Calu3 (cell line): ENCODE measurements at regions of chr6 and their contacts with region 1.

Region 1: GRCh38 chr6:138588805-138589434 is 89.6 kb upstream of the NHSL1 start:
- DNase-seq: peak; percentile 24
- H3K4me3 Mint-ChIP-seq: no peak overlapping the region
- H3K27ac Mint-ChIP-seq: no peak overlapping the region
- H3K4me1 Mint-ChIP-seq: peaks cover 28% of the 10 kb centered on the region
- H3K27me3 Mint-ChIP-seq: no peaks in the 10 kb centered on the region
- CTCF ChIP-seq: peak; percentile 66

Region 2: GRCh38 chr6:136956590-136957544 is 1632.1 kb before region 1 on chr6:
- CTCF ChIA-PET with region 1: no interaction called
- intact Hi-C with region 1: no loop called
- DNase-seq: no peak
- H3K4me3 Mint-ChIP-seq: no peak overlapping the region
- H3K27ac Mint-ChIP-seq: no peak overlapping the region
- H3K4me1 Mint-ChIP-seq: peaks cover 21% of the 10 kb centered on the region
- H3K27me3 Mint-ChIP-seq: no peaks in the 10 kb centered on the region
- CTCF ChIP-seq: no peak

Region 3: DNA sequence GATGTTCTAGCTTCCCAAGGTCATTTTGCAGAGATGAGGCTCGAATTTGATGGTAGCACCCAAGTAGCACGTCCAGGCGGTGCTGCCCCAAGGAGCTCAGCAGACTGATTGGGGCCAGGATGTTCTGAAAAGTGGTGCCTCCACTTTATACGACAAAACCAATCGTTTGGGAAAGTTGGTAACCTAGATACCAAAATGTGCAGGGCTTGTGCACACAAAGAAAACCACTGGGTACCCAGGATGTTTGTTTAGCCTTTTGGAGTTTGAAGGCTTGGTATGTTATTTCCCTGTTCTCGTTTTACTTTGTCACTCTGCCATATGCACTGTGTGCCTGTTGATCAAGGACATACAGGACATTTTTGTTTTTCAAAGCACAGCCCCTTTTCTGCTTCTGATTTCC is 329.9 kb before region 1 on chr6:
- CTCF ChIA-PET with region 1: no interaction called
- intact Hi-C with region 1: no loop called
- DNase-seq: no peak
- H3K4me3 Mint-ChIP-seq: no peak overlapping the region
- H3K27ac Mint-ChIP-seq: no peak overlapping the region
- H3K4me1 Mint-ChIP-seq: no peaks in the 10 kb centered on the region
- H3K27me3 Mint-ChIP-seq: no peaks in the 10 kb centered on the region
- CTCF ChIP-seq: no peak

Region 4: DNA sequence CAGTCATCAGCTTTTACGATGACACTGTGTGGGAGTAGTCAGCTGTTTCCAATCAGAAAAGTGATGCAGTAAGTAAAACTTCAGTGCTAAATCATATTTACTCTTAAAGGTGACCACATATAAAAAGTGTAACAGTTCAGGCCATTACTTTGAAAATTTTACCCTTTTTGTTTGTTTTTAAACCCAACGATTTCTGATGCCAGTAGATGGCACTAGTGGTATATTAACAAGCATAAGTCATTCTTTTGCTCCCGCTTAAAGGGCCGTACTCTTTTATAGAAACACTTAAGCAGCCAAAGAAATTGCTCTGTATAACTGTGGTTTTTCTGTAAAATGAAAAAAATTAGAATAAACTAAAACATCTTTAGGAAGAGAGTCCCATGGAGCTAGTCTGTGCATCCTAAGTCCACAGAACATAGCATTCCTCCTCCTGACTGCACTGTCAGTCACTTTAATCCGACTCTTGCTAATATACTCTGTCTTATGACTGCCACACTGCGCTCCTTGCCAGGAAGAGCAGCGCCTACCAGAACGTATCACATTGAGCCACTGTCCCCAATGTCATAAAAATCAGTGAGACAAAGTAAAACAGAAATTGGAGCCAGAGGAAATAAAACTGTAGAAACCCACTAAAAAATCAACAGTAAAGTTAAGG is 159.8 kb before region 1 on chr6:
- CTCF ChIA-PET with region 1: no interaction called
- intact Hi-C with region 1: loop called (anchors 10 kb)
- DNase-seq: no peak
- H3K4me3 Mint-ChIP-seq: no peak overlapping the region
- H3K27ac Mint-ChIP-seq: no peak overlapping the region
- H3K4me1 Mint-ChIP-seq: no peaks in the 10 kb centered on the region
- H3K27me3 Mint-ChIP-seq: no peaks in the 10 kb centered on the region
- CTCF ChIP-seq: peak; percentile 24

Region 5: GRCh38 chr6:138572167-138572865 is 16.6 kb before region 1 on chr6:
- CTCF ChIA-PET with region 1: no interaction called
- intact Hi-C with region 1: no loop called
- DNase-seq: peak; percentile 61
- H3K4me3 Mint-ChIP-seq: no peak overlapping the region
- H3K27ac Mint-ChIP-seq: no peak overlapping the region
- H3K4me1 Mint-ChIP-seq: peaks cover 8% of the 10 kb centered on the region
- H3K27me3 Mint-ChIP-seq: no peaks in the 10 kb centered on the region
- CTCF ChIP-seq: no peak

Region 6: GRCh38 chr6:138692058-138692977 is 103.4 kb after region 1 on chr6:
- CTCF ChIA-PET with region 1: no interaction called
- intact Hi-C with region 1: loop called (anchors 5 kb)
- DNase-seq: peak; percentile 75
- H3K4me3 Mint-ChIP-seq: peak overlapping the region; percentile 96
- H3K27ac Mint-ChIP-seq: peak overlapping the region; percentile 89
- H3K4me1 Mint-ChIP-seq: no peaks in the 10 kb centered on the region
- H3K27me3 Mint-ChIP-seq: no peaks in the 10 kb centered on the region
- CTCF ChIP-seq: peak; percentile 88

Region 7: DNA sequence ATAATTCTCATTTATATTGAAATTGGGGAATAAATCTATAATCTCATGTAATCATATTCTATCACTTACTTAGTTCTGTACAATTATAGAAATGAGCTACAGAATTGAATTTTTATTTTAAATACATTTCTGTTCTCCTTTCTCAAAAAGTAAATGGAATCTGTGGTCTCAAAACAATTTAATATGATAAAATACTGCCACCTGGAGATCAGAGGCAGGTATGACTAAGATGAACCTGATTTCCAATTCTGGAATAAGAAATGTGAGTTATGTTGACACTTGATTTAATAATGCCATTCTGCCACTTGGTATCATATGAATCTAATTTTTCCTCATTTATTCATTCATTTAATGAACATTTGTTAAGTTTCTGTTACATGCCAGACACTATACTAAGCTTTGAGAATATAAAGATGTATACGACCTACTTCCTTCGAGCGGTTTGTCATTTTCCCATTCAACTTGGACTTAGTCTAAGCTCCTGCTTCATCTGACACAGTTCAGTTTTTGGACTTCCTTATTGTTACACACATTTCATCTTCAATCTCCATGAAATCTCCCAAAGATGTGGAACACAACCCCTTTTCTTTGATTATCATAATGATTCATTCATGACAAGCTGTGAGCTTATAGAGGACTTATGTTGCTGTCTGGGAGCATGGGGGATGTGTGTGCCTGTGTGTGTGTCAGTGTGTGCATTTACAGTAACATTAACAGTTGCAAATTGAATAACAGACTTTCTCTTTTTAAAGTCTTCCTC is 177.2 kb after region 1 on chr6:
- CTCF ChIA-PET with region 1: interaction called, 3 read pairs
- intact Hi-C with region 1: loop called (anchors 1 kb)
- DNase-seq: no peak
- H3K4me3 Mint-ChIP-seq: no peak overlapping the region
- H3K27ac Mint-ChIP-seq: no peak overlapping the region
- H3K4me1 Mint-ChIP-seq: no peaks in the 10 kb centered on the region
- H3K27me3 Mint-ChIP-seq: no peaks in the 10 kb centered on the region
- CTCF ChIP-seq: no peak